ENCODE measurements at regions of chr19 and their contacts with region 1.

Region 1: DNA sequence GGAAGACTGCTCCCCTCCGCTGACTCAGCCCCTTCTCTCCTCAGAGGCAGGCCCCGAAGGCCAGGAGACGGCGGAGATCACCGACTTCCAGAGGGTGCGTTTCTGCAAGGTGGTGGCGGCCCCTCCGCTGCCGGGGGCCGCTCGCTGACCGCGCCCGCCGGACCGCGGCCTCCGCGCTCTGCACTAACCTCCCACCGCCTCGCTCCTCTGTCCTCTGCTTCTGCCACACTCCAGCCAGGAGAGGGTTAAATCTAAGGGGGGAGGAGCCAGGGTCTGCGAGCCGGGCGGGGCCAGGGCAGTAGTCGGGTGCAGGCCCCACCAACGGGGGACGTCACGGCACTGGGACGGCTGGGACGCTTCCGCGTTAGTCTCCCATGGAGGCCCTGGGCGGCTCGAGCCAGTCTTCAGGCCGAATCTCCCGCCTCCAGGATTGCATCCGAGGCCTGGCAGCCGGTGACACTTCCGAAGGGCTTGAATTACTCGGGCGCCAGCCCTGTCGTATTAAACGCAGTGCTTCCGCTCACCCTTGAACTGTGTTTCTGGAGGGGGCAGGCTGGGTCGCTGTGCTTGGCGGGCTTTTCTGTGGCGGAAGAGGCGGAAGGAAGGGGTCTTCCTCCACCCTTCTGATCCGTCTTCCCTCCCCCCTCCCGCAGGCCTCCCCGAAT is 1.2 kb upstream of the INAFM1 start:
- DNase-seq: peak; percentile 81 to 91 (median 88)
- ATAC-seq: peak; percentile 74
- H3K4me3 ChIP-seq: peak overlapping the region; percentile 100
- H3K4me3 Mint-ChIP-seq: peak overlapping the region; percentile 83 to 99 (median 95)
- H3K27ac ChIP-seq: peak overlapping the region; percentile 95
- H3K27ac Mint-ChIP-seq: peak overlapping the region; percentile 93 to 98 (median 97)
- H3K4me1 ChIP-seq: peaks cover 3 to 14% of the 10 kb centered on the region in 2 donors
- H3K4me1 Mint-ChIP-seq: peaks cover 20 to 28% (median 27%) of the 10 kb centered on the region in 7 donors
- H3K27me3 ChIP-seq: no peaks in the 10 kb centered on the region
- H3K27me3 Mint-ChIP-seq: no peaks in the 10 kb centered on the region

Region 2: DNA sequence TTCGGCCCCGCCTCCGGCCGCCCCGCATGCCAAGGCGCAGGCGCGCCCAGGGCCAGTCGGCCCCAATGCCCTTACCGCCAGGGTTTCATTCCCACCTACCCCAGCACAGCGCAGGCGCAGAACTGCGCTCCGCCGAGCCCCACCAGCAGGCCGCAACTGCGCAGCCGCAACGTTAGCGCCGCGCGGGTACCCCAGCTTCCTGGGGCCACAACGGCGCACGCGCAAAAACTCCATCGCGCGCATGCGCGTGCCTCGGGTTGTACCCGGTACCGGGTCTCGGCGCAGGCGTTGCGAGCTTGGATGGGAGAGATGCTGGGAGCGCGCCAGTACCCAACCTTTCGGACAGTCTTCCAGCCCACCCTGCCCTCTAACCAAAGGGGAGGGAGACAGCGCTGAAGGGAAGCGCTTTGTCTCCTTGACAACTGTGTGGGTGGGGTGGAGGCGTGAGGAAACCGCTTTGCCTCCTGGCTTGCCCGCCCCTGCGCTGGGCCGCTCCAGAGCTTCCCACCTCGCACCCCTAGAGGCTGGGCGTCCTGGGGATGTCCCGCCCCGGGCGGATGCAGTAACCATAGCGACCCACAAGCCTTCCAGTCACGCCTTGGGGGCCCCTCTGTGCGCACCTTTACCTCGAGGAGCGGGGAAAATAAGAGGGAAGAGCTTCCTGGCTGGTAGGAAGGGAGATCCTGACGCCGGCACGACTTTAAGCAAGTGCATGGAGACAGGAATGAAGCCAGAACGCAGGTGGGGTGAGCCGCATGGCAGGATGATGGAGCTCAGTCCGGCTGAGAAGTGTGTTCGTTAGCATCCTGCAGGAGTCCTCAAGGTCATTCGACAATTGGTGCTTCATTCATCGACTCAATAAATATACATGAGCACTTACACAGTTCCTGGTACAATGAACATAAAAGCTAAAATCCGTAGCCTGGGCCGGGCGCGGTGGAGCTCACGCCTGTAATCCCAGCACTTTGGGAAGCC is 1370.5 kb before region 1 on chr19:
- CTCF ChIA-PET with region 1: no interaction called
- POLR2A ChIA-PET with region 1: no interaction called
- intact Hi-C with region 1: loop called in 1 of 2 experiments (anchors 5 kb)
- DNase-seq: peak; percentile 96 to 100 (median 99)
- ATAC-seq: peak; percentile 93
- H3K4me3 ChIP-seq: peak overlapping the region; percentile 93
- H3K4me3 Mint-ChIP-seq: peak overlapping the region; percentile 93 to 98 (median 96)
- H3K27ac ChIP-seq: peak overlapping the region; percentile 78
- H3K27ac Mint-ChIP-seq: peak overlapping the region; percentile 71 to 93 (median 87)
- H3K4me1 ChIP-seq: peaks cover 0 to 5% of the 10 kb centered on the region in 2 donors
- H3K4me1 Mint-ChIP-seq: peaks cover 10 to 27% (median 17%) of the 10 kb centered on the region in 7 donors
- H3K27me3 ChIP-seq: no peaks in the 10 kb centered on the region
- H3K27me3 Mint-ChIP-seq: peaks cover 0 to 17% (median 0%) of the 10 kb centered on the region in 5 donors

Region 3: GRCh38 chr19:46717034-46717723 is 556.3 kb before region 1 on chr19 and contains the start of gene PRKD2:
- CTCF ChIA-PET with region 1: no interaction called
- POLR2A ChIA-PET with region 1: no interaction called
- intact Hi-C with region 1: loop called in 1 of 2 experiments (anchors 10 kb)
- DNase-seq: peak; percentile 68 to 96 (median 80)
- ATAC-seq: peak; percentile 71
- H3K4me3 ChIP-seq: peak within 1 kb of the TSS; percentile 97
- H3K4me3 Mint-ChIP-seq: peak within 1 kb of the TSS; percentile 89 to 98 (median 95)
- H3K27ac ChIP-seq: peak within 1 kb of the TSS; percentile 98
- H3K27ac Mint-ChIP-seq: peak within 1 kb of the TSS; percentile 94 to 99 (median 97)
- H3K4me1 ChIP-seq: peaks cover 29% of the 10 kb centered on the region in 2 donors
- H3K4me1 Mint-ChIP-seq: peaks cover 30 to 57% (median 44%) of the 10 kb centered on the region in 7 donors
- H3K27me3 ChIP-seq: no peaks in the 10 kb centered on the region
- H3K27me3 Mint-ChIP-seq: no peaks in the 10 kb centered on the region
- total RNA-seq, gene PRKD2: 120 to 181 (median 123) TPM

Region 4: GRCh38 chr19:47047763-47048405 is 225.6 kb before region 1 on chr19:
- CTCF ChIA-PET with region 1: no interaction called
- POLR2A ChIA-PET with region 1: no interaction called
- intact Hi-C with region 1: loop called in 1 of 2 experiments (anchors 1 kb)
- DNase-seq: peak; percentile 41 to 80 (median 58)
- ATAC-seq: peak; percentile 57
- H3K4me3 ChIP-seq: peak overlapping the region; percentile 86
- H3K4me3 Mint-ChIP-seq: peak overlapping the region; percentile 89 to 100 (median 97)
- H3K27ac ChIP-seq: peak overlapping the region; percentile 79
- H3K27ac Mint-ChIP-seq: peak overlapping the region; percentile 82 to 96 (median 93)
- H3K4me1 ChIP-seq: peaks cover 6 to 7% of the 10 kb centered on the region in 2 donors
- H3K4me1 Mint-ChIP-seq: peaks cover 10 to 22% (median 16%) of the 10 kb centered on the region in 7 donors
- H3K27me3 ChIP-seq: no peaks in the 10 kb centered on the region
- H3K27me3 Mint-ChIP-seq: peaks cover 0 to 2% (median 0%) of the 10 kb centered on the region in 5 donors

Region 5: DNA sequence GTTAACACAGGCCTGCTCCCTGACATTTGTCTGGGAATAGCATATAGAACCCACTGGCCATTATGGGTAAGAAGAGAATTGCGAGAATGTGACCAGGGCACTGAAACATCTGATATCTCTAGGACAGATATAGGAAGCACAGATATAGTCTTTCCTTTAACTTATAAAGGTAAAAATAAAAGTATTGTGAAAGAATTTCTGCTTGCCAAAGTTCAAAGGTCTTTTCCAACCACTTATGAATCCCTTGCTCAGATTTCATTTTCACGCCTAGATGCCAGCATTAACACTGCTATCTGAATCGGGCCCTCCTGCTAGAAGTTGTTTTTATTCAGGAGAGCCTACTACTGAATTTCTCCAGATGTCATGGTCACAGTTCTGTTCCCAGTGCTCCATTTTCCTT is 70.2 kb before region 1 on chr19:
- CTCF ChIA-PET with region 1: no interaction called
- POLR2A ChIA-PET with region 1: no interaction called
- intact Hi-C with region 1: no loop called
- DNase-seq: no peak
- ATAC-seq: no peak
- H3K4me3 ChIP-seq: no peak overlapping the region
- H3K4me3 Mint-ChIP-seq: peak overlapping the region in 1 of 10 donors; percentile 37
- H3K27ac ChIP-seq: no peak overlapping the region
- H3K27ac Mint-ChIP-seq: peak overlapping the region in 8 of 9 donors; percentile 12 to 84 (median 61)
- H3K4me1 ChIP-seq: peaks cover 0 to 7% of the 10 kb centered on the region in 2 donors
- H3K4me1 Mint-ChIP-seq: peaks cover 14 to 37% (median 28%) of the 10 kb centered on the region in 7 donors
- H3K27me3 ChIP-seq: no peaks in the 10 kb centered on the region
- H3K27me3 Mint-ChIP-seq: no peaks in the 10 kb centered on the region

Region 6: DNA sequence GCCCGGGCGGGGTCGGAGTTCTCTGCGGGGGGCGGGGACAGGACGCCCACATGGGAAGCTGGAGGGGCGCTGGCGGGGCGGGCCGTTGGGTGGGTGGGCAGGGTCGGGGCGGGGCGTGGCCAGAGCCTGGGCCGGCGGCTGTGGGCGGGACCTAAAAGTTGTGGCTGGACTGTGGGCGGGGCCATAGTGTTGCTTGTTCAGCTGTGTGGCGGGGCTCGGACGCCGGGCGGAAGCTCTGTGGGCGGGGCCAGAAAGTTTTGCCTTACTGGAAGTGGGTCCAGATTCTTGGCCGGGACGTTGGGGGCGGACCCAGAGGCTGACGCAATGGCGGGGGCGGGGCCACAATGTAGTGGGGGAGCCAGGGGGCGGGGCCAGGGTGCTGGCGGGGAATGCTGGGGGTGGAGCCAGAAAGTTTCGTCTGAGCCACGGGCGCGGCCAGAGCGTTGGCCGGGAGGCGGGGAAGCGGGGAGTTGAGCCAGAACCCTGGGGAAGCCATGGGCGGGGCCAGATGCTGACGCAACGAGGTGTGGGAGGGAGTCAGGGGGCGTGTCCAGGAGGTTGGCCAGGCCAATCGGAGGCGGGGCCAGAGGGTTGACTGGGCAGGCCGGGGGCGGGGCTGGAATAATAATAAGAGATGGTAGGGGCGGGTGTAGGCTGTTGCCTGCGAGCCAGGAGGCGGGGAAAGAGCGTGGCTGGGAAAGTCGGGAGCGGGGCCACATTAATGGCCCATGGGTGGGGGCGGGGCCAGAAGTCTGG is 16.6 kb before region 1 on chr19:
- CTCF ChIA-PET with region 1: interaction called, 4 read pairs
- POLR2A ChIA-PET with region 1: interaction called, 44 read pairs
- intact Hi-C with region 1: loop called (anchors 1 kb)
- DNase-seq: peak; percentile 94 to 100 (median 96)
- ATAC-seq: peak; percentile 88
- H3K4me3 ChIP-seq: peak overlapping the region; percentile 65
- H3K4me3 Mint-ChIP-seq: peak overlapping the region; percentile 85 to 97 (median 90)
- H3K27ac ChIP-seq: peak overlapping the region; percentile 90
- H3K27ac Mint-ChIP-seq: peak overlapping the region; percentile 90 to 99 (median 97)
- H3K4me1 ChIP-seq: peaks cover 15 to 24% of the 10 kb centered on the region in 2 donors
- H3K4me1 Mint-ChIP-seq: peaks cover 35 to 46% (median 39%) of the 10 kb centered on the region in 7 donors
- H3K27me3 ChIP-seq: no peaks in the 10 kb centered on the region
- H3K27me3 Mint-ChIP-seq: peaks cover 0 to 2% (median 0%) of the 10 kb centered on the region in 5 donors

Region 7: DNA sequence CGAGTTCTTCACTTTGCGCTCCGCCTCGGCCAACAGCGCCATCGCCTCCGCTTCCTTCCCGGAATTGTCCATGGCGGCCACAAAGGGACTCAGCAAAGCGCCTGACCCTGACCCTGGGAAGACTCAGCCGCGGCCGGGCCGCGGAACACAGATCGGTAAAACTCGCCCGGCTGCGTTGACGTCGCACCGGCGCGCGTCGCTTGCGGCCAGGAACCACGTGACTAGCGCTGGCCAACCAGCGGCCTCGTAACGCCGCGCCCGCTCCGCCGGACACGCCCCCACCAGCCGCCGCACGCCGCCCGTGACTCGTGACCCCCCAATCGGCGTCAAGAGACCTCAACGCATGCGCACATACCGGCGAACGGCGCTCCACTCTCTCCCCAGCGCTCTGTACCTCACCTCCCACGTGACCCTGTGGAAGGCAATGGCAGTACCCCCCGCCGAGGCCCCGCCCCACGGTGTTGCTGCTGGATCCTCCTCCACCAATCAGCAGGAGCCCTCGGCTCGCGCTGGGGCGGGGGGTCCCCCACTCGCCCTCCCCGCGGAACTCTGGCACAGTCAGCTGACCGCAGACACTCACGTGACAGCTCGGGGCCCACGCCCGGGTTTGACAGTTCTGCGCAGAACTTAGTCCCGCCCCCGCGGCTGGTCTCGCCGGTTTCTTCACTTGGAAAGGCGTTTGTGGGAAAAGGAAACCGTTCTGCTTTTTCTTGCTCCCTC is 241.6 kb after region 1 on chr19 and contains the start of gene NAPA:
- CTCF ChIA-PET with region 1: no interaction called
- POLR2A ChIA-PET with region 1: no interaction called
- intact Hi-C with region 1: loop called in 1 of 2 experiments (anchors 1 kb)
- DNase-seq: peak; percentile 99 to 100 (median 100)
- ATAC-seq: peak; percentile 96
- H3K4me3 ChIP-seq: peak within 1 kb of the TSS; percentile 97
- H3K4me3 Mint-ChIP-seq: peak within 1 kb of the TSS; percentile 81 to 100 (median 98)
- H3K27ac ChIP-seq: peak within 1 kb of the TSS; percentile 100
- H3K27ac Mint-ChIP-seq: peak within 1 kb of the TSS; percentile 81 to 99 (median 98)
- H3K4me1 ChIP-seq: peaks cover 50 to 64% of the 10 kb centered on the region in 2 donors
- H3K4me1 Mint-ChIP-seq: peaks cover 64 to 97% (median 92%) of the 10 kb centered on the region in 7 donors
- H3K27me3 ChIP-seq: no peaks in the 10 kb centered on the region
- H3K27me3 Mint-ChIP-seq: peaks cover 0 to 6% (median 0%) of the 10 kb centered on the region in 5 donors
- total RNA-seq, gene NAPA: 86.2 to 136 (median 107) TPM

Region 8: GRCh38 chr19:47713046-47714021 is 439.9 kb after region 1 on chr19 and contains the start of gene EHD2:
- CTCF ChIA-PET with region 1: no interaction called
- POLR2A ChIA-PET with region 1: no interaction called
- intact Hi-C with region 1: no loop called
- DNase-seq: peak in 6 of 9 donors; percentile 12 to 70 (median 41)
- ATAC-seq: peak; percentile 73
- H3K4me3 ChIP-seq: no peak within 1 kb of the TSS
- H3K4me3 Mint-ChIP-seq: peak within 1 kb of the TSS in 3 of 10 donors; percentile 16 to 57 (median 46)
- H3K27ac ChIP-seq: no peak within 1 kb of the TSS
- H3K27ac Mint-ChIP-seq: peak within 1 kb of the TSS in 1 of 9 donors; percentile 43
- H3K4me1 ChIP-seq: no peaks in the 10 kb centered on the region
- H3K4me1 Mint-ChIP-seq: peaks cover 0 to 11% (median 4%) of the 10 kb centered on the region in 7 donors
- H3K27me3 ChIP-seq: peaks cover 0 to 4% of the 10 kb centered on the region in 2 donors
- H3K27me3 Mint-ChIP-seq: peaks cover 32 to 60% (median 44%) of the 10 kb centered on the region in 5 donors
- total RNA-seq, gene EHD2: 0.15 to 0.37 (median 0.19) TPM in 3 of 5 experiments, not detected in the others

Region 9: GRCh38 chr19:47745010-47745901 is 471.8 kb after region 1 on chr19 and contains the start of gene NOP53:
- CTCF ChIA-PET with region 1: no interaction called
- POLR2A ChIA-PET with region 1: no interaction called
- intact Hi-C with region 1: loop called in 1 of 2 experiments (anchors 1 kb)
- DNase-seq: peak; percentile 95 to 99 (median 97)
- ATAC-seq: peak; percentile 86
- H3K4me3 ChIP-seq: peak within 1 kb of the TSS; percentile 62
- H3K4me3 Mint-ChIP-seq: peak within 1 kb of the TSS; percentile 93 to 100 (median 99)
- H3K27ac ChIP-seq: peak within 1 kb of the TSS; percentile 100
- H3K27ac Mint-ChIP-seq: peak within 1 kb of the TSS; percentile 97 to 100 (median 100)
- H3K4me1 ChIP-seq: peaks cover 11 to 50% of the 10 kb centered on the region in 2 donors
- H3K4me1 Mint-ChIP-seq: peaks cover 18 to 58% (median 40%) of the 10 kb centered on the region in 7 donors
- H3K27me3 ChIP-seq: no peaks in the 10 kb centered on the region
- H3K27me3 Mint-ChIP-seq: peaks cover 0 to 3% (median 0%) of the 10 kb centered on the region in 5 donors
- total RNA-seq, gene NOP53: 316 to 1,143 (median 992) TPM